ENCODE measurements at regions of chr14 and their contacts with region 1.

Region 1: GRCh38 chr14:50109342-50109741 is 7.0 kb downstream of the VCPKMT start:
- H3K4me3 ChIP-seq: no peak overlapping the region
- H3K27ac ChIP-seq: no peak overlapping the region
- H3K4me1 ChIP-seq: no peaks in the 10 kb centered on the region
- CTCF ChIP-seq: no peak

Region 2: GRCh38 chr14:49879683-49880204 is 229.6 kb before region 1 on chr14:
- CTCF ChIA-PET with region 1: interaction called, 13 read pairs
- POLR2A ChIA-PET with region 1: interaction called, 3 read pairs
- H3K4me3 ChIP-seq: no peak overlapping the region
- H3K27ac ChIP-seq: peak overlapping the region; percentile 74; the same call in 1 of the 2 replicates
- H3K4me1 ChIP-seq: peaks cover 13% of the 10 kb centered on the region
- CTCF ChIP-seq: peak; percentile 40; the same call in 1 of the 2 replicates

Region 3: DNA sequence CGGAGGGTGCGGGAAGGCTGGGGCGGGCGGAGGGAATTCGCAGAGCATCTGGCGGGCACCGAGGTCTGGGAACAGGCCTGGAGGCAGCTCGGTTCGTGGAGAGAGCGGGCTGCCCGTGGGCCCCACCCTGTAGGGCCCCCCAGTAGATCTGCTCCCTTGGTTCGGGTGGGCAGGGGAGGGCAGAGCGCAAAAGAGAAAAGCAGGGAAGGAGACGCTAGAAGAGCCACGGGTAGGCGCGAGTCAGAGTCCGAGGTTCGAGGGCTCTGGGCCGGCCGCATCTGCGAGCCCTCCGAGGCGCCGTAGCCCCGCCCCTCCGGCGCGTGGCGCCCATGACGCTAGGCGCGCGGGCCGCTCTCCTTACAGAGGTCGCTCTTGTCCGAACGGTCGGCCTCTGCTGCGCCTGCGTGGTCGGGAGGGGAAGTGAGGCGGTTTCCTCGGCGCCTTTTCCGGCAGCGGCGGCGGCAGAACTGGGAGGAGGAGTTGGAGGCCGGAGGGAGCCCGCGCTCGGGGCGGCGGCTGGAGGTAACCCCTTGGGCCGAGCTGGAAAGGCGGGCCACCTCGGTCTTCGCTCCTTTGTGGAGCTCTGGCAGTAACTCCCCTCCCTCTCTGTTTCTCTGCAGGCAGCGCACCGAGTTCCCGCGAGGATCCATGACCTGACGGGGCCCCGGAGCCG is 216.6 kb before region 1 on chr14 and contains the start of gene ARF6:
- CTCF ChIA-PET with region 1: interaction called, 11 read pairs
- POLR2A ChIA-PET with region 1: no interaction called
- H3K4me3 ChIP-seq: peak within 1 kb of the TSS; percentile 90
- H3K27ac ChIP-seq: peak within 1 kb of the TSS; percentile 99
- H3K4me1 ChIP-seq: peaks cover 5% of the 10 kb centered on the region; the same call in 1 of the 2 replicates
- CTCF ChIP-seq: peak; percentile 74

Region 4: DNA sequence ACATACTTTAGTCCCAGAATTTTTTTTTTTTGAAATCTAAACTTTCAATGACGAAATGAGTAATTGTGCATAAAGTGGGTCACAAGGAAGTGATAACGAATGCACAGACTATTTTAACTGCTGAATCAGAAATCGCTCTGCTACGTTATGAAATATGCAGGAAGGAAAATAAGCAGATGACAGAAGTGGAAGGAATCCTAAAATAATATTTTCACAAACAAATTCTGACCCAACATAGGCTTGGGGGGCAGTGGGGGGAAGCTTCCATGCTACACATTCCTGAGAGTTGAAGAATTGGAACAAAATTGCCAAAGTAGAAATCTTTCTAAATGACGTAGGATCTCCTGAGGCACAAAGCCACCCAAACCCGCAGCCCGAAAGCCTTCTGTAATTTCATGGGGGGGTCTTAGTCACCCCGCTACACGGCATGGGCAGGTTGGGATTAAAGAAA is 126.8 kb before region 1 on chr14:
- CTCF ChIA-PET with region 1: no interaction called
- POLR2A ChIA-PET with region 1: no interaction called
- H3K4me3 ChIP-seq: no peak overlapping the region
- H3K27ac ChIP-seq: no peak overlapping the region
- H3K4me1 ChIP-seq: no peaks in the 10 kb centered on the region
- CTCF ChIP-seq: no peak

Region 5: DNA sequence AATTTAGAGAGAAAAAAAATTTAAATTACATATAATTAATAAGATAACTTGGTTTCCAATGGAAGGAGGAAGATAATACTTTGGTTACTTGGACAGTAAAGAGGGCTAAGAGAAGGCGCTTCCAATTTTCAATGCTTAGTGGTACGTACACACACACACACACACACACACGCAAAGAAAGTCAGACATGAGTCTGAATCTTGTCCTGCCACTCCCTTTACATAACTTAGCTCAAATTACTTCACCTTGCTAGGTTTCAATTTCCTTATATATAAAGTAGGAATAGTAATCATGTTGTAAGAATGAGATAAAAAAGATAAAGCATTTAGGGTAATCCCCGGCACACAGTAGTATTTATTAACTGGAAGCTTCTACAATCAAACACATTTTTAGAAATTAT is 46.8 kb after region 1 on chr14:
- CTCF ChIA-PET with region 1: interaction called, 11 read pairs
- POLR2A ChIA-PET with region 1: no interaction called
- H3K4me3 ChIP-seq: no peak overlapping the region
- H3K27ac ChIP-seq: no peak overlapping the region
- H3K4me1 ChIP-seq: no peaks in the 10 kb centered on the region
- CTCF ChIP-seq: no peak